Activated CD8-positive, alpha-beta T cell treated with anti-CD3 and anti-CD28 coated beads for 36 hours (primary cell): ENCODE measurements at regions of chr15 and their contacts with region 1.

Region 1: DNA sequence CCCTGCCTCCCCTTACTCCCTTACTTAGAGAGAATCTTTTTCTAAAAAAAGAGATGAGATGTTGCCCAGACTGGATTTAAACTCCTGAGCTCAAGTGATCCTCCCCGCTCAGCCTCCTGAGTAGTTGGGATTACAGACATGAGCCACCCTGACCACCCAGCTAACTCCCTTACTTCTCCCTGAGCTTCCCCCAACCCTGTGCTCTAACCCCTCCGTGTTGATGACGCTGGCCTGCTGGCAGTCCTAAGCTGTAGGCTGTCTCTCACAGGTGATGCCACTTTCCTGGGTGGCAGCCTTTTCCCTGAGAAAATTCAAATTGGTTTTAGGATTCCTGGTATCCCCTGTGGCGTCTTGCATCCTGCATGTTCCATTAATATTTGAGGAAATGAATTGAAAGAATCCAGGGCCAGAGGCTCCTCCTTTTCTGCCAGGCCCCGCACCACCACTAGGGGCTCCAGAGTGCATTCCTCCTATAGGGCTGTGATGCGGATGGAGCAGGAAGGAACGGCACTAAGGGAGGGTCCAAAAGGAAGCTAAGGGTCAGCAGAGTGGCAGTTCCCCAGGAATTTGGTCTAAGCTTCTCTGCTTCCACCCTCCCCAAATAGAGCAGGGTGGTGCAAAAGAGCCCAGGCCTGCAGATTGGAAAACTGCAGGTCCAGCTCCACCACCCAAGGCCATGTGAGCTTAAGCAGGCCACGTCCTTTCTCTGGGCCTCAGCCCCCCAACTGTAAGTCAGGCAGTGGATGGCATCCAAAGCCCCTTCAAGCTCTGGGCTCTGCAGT is 101.1 kb downstream of the DAPK2 start:
- DNase-seq: peak; percentile 86
- ATAC-seq: peak; percentile 98
- H3K4me3 Mint-ChIP-seq: no peak overlapping the region
- H3K27ac Mint-ChIP-seq: peak overlapping the region; percentile 3
- H3K4me1 Mint-ChIP-seq: peaks cover 8% of the 10 kb centered on the region
- H3K27me3 Mint-ChIP-seq: no peaks in the 10 kb centered on the region
- CTCF ChIP-seq: peak; percentile 91

Region 2: DNA sequence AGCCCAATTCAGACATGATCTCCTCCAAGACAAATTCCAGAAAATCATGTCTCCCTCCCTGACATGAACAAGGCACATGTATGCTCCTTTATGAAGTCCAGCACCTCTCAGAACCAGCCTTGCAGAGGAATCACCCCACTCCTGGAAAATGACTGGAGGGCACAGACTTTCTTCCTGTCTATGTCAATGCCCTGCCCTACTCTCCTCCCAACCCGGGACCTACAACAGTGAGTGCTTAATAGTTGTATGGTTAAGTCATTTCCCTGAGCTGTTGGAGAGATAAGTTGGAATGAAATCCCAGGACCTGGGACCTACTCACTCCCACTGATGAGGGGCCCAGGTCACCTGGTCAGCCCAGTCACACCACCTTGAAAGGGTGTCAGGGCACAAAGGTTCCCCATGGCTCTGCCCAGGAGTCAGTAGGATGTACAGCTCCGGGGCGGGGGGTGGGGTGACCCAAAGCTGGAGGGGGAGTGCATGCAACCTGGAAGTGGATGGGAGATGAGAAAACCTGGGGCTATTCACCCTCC is 31.3 kb before region 1 on chr15:
- CTCF ChIA-PET with region 1: interaction called, 17 read pairs
- POLR2A ChIA-PET with region 1: no interaction called
- intact Hi-C with region 1: no loop called
- DNase-seq: no peak
- ATAC-seq: no peak
- H3K4me3 Mint-ChIP-seq: no peak overlapping the region
- H3K27ac Mint-ChIP-seq: no peak overlapping the region
- H3K4me1 Mint-ChIP-seq: no peaks in the 10 kb centered on the region
- H3K27me3 Mint-ChIP-seq: no peaks in the 10 kb centered on the region
- CTCF ChIP-seq: no peak

Region 3: DNA sequence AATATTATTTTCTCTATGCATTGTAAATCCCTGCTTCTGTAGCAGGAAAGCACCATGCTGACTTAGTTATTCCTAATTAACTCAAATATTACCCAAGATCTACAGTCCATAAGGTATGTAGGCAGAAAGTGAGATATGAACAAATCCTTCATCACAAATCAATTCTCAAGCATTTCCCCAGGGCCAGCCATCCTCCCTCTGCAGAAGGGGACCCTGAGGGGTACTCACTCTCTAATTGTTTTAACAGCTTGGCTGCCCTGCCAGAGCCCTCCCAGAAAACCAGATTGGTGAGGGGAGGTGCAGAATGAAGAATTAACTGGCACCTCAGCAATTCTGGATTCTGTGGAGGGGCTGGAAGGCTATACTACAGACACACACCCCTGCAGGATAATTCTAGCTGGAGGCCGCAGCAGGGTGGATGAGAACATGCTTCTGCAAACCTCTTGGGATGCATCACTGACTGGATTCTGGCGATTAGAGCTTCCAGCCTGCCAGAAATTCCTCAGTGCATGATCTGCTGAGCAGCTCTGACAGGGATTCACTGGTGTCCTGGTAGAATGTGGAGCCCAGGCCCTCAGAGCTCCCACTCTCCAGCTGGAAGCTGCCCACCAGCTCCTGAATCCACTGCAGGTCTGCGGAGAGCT is 22.8 kb before region 1 on chr15:
- CTCF ChIA-PET with region 1: interaction called, 17 read pairs
- POLR2A ChIA-PET with region 1: no interaction called
- intact Hi-C with region 1: no loop called
- DNase-seq: no peak
- ATAC-seq: no peak
- H3K4me3 Mint-ChIP-seq: no peak overlapping the region
- H3K27ac Mint-ChIP-seq: no peak overlapping the region
- H3K4me1 Mint-ChIP-seq: peaks cover 13% of the 10 kb centered on the region
- H3K27me3 Mint-ChIP-seq: no peaks in the 10 kb centered on the region
- CTCF ChIP-seq: no peak

Region 4: DNA sequence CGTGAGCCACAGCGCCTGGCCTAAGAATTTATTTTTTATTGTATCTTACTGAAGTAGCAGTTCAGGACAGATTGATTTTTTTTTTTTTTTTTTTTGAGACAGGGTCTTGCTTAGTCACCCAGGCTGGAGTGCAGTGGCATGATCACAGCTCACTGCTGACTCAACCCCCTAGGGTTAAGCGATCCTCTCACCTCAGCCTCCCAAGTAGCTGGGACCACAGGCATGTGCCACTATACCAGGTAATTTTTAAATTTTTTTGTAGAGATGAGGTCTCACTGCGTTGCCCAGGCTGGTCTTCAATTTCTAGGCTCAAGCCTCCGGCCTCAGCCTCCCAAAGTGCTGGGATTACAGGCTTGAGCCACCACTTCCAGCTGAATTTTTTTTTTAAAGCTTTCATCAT is 11.7 kb before region 1 on chr15:
- CTCF ChIA-PET with region 1: interaction called, 34 read pairs
- POLR2A ChIA-PET with region 1: no interaction called
- intact Hi-C with region 1: no loop called
- DNase-seq: peak; percentile 49
- ATAC-seq: peak; percentile 78
- H3K4me3 Mint-ChIP-seq: no peak overlapping the region
- H3K27ac Mint-ChIP-seq: no peak overlapping the region
- H3K4me1 Mint-ChIP-seq: peaks cover 12% of the 10 kb centered on the region
- H3K27me3 Mint-ChIP-seq: no peaks in the 10 kb centered on the region
- CTCF ChIP-seq: no peak

Region 5: GRCh38 chr15:63970621-63971426 is 25.6 kb after region 1 on chr15:
- CTCF ChIA-PET with region 1: interaction called, 30 read pairs
- POLR2A ChIA-PET with region 1: no interaction called
- intact Hi-C with region 1: no loop called
- DNase-seq: peak; percentile 65
- ATAC-seq: peak; percentile 83
- H3K4me3 Mint-ChIP-seq: peak overlapping the region; percentile 11
- H3K27ac Mint-ChIP-seq: peak overlapping the region; percentile 89
- H3K4me1 Mint-ChIP-seq: peaks cover 41% of the 10 kb centered on the region
- H3K27me3 Mint-ChIP-seq: no peaks in the 10 kb centered on the region
- CTCF ChIP-seq: no peak

Region 6: DNA sequence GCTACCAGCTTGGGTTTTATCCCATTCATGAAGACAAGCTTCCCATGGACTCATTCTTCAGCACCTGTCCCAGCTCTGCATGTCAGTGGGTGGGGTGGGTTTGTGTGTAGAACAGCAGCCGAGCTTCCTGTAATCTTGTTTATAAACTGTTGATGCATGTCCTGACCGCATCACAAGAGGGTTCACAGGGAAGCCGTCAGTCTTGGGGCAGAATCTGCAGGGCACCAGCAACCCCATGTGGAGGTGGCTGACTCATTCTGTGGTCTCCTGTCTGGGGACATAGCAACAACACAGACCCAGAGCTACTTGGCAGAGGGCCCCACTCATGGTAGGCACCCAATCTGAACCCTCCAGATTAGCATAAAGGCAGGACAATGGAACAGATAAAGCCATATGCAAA is 65.5 kb after region 1 on chr15:
- CTCF ChIA-PET with region 1: interaction called, 26 read pairs
- POLR2A ChIA-PET with region 1: interaction called, 3 read pairs
- intact Hi-C with region 1: no loop called
- DNase-seq: peak; percentile 95
- ATAC-seq: peak; percentile 88
- H3K4me3 Mint-ChIP-seq: peak overlapping the region; percentile 22
- H3K27ac Mint-ChIP-seq: peak overlapping the region; percentile 88
- H3K4me1 Mint-ChIP-seq: peaks cover 37% of the 10 kb centered on the region
- H3K27me3 Mint-ChIP-seq: no peaks in the 10 kb centered on the region
- CTCF ChIP-seq: no peak

Region 7: GRCh38 chr15:64067564-64068030 is 122.4 kb after region 1 on chr15:
- CTCF ChIA-PET with region 1: interaction called, 19 read pairs
- POLR2A ChIA-PET with region 1: no interaction called
- intact Hi-C with region 1: no loop called
- DNase-seq: peak; percentile 80
- ATAC-seq: peak; percentile 89
- H3K4me3 Mint-ChIP-seq: no peak overlapping the region
- H3K27ac Mint-ChIP-seq: no peak overlapping the region
- H3K4me1 Mint-ChIP-seq: peaks cover 4% of the 10 kb centered on the region
- H3K27me3 Mint-ChIP-seq: no peaks in the 10 kb centered on the region
- CTCF ChIP-seq: peak; percentile 81

Region 8: DNA sequence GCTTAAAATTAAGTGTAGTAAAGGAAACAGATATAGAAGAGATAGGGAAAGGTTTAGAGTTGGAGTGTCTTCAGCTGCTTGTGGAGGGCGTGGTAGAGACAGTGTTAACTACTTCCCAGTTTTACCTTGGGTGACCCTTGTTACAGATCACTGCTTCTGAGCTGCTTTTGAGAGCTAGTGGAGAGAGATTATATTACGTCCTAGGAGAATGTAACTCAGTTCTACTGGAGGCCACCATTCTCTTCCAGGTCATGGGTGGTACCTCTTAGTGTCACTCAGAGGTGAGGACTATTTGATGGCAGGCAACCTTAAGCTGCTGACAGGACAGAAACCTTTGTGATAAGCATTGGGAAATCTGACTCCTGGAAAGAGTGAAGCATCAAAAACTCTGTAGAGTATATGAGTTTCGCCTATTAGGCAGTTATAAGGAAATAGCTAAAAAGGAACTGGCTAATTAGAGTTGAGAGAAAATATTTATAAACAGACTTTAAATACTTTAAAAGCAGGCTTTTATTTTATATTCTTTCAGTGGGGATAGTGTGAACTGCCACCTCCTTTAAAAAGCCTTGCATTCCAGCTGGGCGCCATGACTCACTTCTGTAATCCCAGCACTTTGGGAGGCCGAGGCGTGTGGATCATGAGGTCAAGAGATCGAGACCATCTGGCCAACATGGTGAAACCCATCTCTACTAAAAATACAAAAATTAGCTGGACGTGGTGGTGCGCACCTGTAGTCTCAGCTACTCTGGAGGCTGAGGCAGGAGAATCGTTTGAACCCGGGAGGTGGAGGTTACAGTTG is 621.6 kb after region 1 on chr15:
- CTCF ChIA-PET with region 1: no interaction called
- POLR2A ChIA-PET with region 1: no interaction called
- intact Hi-C with region 1: no loop called
- DNase-seq: no peak
- ATAC-seq: no peak
- H3K4me3 Mint-ChIP-seq: no peak overlapping the region
- H3K27ac Mint-ChIP-seq: no peak overlapping the region
- H3K4me1 Mint-ChIP-seq: peaks cover 52% of the 10 kb centered on the region
- H3K27me3 Mint-ChIP-seq: no peaks in the 10 kb centered on the region
- CTCF ChIP-seq: no peak